HCT116 (cell line): ENCODE measurements at regions of chr19 and their contacts with region 1.

Region 1: DNA sequence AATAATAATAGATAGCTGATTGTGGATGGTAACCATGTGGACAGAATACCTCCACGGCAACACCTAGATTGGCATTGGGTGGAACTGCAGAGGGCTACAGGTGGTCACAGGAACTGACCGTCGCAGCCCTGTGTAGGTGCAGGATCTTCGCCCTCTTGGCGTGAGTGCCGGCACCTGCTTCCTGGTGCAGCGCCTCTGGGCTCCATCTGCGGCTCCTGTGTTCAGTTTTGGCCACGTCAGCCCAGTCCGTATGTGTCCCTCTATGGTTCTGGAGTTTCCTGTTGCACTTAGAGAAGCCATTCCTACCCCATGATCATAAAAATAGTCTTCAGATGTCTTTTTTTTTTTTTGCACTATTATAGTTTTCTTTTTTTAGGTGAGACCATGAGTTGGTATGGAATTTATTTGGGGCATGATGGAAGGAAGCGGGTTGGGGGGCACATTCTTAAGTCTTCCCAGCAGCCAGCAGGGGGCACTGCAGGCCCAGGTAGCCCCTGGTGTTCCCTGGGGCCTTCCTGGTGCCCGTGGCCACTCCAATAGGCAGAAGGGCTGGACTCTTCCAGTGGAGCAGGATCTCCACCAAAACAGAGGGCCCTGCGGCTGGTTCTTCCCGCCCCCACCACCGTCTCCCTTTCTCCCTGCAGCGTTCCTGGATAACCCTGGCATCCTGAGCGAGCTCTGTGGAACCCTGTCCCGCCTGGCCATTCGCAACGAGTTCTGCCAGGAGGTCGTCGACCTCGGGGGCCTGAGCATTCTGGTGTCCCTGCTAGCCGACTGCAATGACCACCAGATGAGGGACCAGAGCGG is 10.1 kb upstream of the SLC25A42 start:
- DNase-seq: peak; percentile 57
- ATAC-seq: peak; percentile 88
- H3K4me3 ChIP-seq: no peak overlapping the region
- H3K27ac ChIP-seq: no peak overlapping the region
- H3K4me1 ChIP-seq: no peaks in the 10 kb centered on the region
- H3K27me3 ChIP-seq: no peaks in the 10 kb centered on the region
- CTCF ChIP-seq: peak; percentile 77 to 86 (median 84)
- POLR2A ChIP-seq: no peak
- RAD21 ChIP-seq: peak; percentile 94

Region 2: DNA sequence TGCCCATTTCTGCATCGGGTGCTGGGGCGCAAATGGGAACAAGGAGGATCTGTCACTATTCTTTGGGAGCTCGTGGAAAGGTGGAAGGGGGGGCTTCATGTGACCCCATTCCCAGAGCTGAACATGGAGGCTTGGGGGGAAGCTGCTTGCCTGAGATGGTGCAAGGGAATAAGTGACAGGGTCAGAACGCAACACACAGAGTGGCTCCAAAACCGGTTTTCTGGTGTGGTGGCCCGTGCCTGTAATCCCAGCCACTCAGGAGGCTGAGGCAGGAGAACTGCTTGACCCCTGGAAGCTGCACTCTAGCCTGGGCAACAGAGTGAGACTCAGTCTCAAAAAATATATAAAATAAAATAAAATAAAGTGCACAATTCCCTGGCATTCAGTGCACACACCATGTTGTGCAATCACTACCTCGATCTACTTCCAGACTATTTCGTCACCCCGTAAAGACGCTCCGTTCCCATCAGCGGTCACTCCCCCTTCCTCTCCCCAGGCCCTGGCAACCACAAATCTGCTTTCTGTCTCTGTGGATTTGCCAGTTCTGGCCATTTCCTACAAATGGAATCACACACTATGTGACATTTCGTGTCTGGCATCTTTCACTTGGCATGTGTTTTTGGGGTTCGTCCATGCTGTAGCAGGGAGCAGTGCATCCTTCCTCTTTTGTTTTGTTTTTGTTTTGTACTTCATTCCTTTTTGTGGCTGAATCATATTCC is 244.4 kb before region 1 on chr19:
- CTCF ChIA-PET with region 1: no interaction called
- POLR2A ChIA-PET with region 1: no interaction called
- RAD21 ChIA-PET with region 1: no interaction called
- intact Hi-C with region 1: no loop called
- DNase-seq: no peak
- ATAC-seq: no peak
- H3K4me3 ChIP-seq: no peak overlapping the region
- H3K27ac ChIP-seq: no peak overlapping the region
- H3K4me1 ChIP-seq: no peaks in the 10 kb centered on the region
- H3K27me3 ChIP-seq: no peaks in the 10 kb centered on the region; the same call in 1 of the 2 replicates
- CTCF ChIP-seq: no peak
- POLR2A ChIP-seq: no peak
- RAD21 ChIP-seq: no peak

Region 3: GRCh38 chr19:19115954-19116353 is 62.2 kb after region 1 on chr19:
- CTCF ChIA-PET with region 1: interaction called, 3 read pairs
- POLR2A ChIA-PET with region 1: no interaction called
- RAD21 ChIA-PET with region 1: no interaction called
- intact Hi-C with region 1: loop called (anchors 1 kb)
- DNase-seq: no peak
- ATAC-seq: peak; percentile 72
- H3K4me3 ChIP-seq: no peak overlapping the region
- H3K27ac ChIP-seq: no peak overlapping the region
- H3K4me1 ChIP-seq: peaks cover 5 to 13% of the 10 kb centered on the region in 2 experiments; a peak in 3 of 4 replicates
- H3K27me3 ChIP-seq: no peaks in the 10 kb centered on the region
- CTCF ChIP-seq: peak; percentile 54 to 88 (median 83); a peak in 5 of 6 replicates
- POLR2A ChIP-seq: no peak
- RAD21 ChIP-seq: peak; percentile 69

Region 4: GRCh38 chr19:19139876-19140229 is 86.1 kb after region 1 on chr19:
- CTCF ChIA-PET with region 1: interaction called, 3 read pairs
- POLR2A ChIA-PET with region 1: no interaction called
- RAD21 ChIA-PET with region 1: interaction called in 1 of 2 experiments, 3 read pairs
- intact Hi-C with region 1: loop called (anchors 1 kb)
- DNase-seq: no peak
- ATAC-seq: no peak
- H3K4me3 ChIP-seq: no peak overlapping the region
- H3K27ac ChIP-seq: no peak overlapping the region
- H3K4me1 ChIP-seq: peaks cover 10 to 18% of the 10 kb centered on the region in 2 experiments
- H3K27me3 ChIP-seq: no peaks in the 10 kb centered on the region
- CTCF ChIP-seq: no peak
- POLR2A ChIP-seq: no peak
- RAD21 ChIP-seq: no peak